Transverse colon (tissue), 4 donors: ENCODE measurements at regions of chr20 and their contacts with region 1.

Region 1: GRCh38 chr20:63864847-63865640 is at the start of gene TPD52L2:
- DNase-seq: peak; percentile 99
- H3K4me3 ChIP-seq: peak within 1 kb of the TSS; percentile 77 to 92 (median 86)
- H3K27ac ChIP-seq: peak within 1 kb of the TSS; percentile 92 to 96 (median 94)
- H3K4me1 ChIP-seq: peaks cover 19 to 24% (median 22%) of the 10 kb centered on the region in 4 donors
- H3K27me3 ChIP-seq: no peaks in the 10 kb centered on the region
- CTCF ChIP-seq: no peak
- EP300 ChIP-seq: no peak
- POLR2A ChIP-seq: peak; percentile 97
- total RNA-seq, gene TPD52L2: 40.8 to 67.0 (median 62.6) TPM

Region 2: GRCh38 chr20:63206904-63207303 is 658.1 kb before region 1 on chr20:
- in situ Hi-C with region 1: no loop called
- intact Hi-C with region 1: no loop called
- DNase-seq: no peak
- H3K4me3 ChIP-seq: no peak overlapping the region
- H3K27ac ChIP-seq: no peak overlapping the region
- H3K4me1 ChIP-seq: peaks cover 0 to under 1% (median 0%) of the 10 kb centered on the region in 4 donors
- H3K27me3 ChIP-seq: no peaks in the 10 kb centered on the region
- CTCF ChIP-seq: no peak
- EP300 ChIP-seq: no peak
- POLR2A ChIP-seq: no peak

Region 3: GRCh38 chr20:63580796-63581461 is 284.1 kb before region 1 on chr20:
- in situ Hi-C with region 1: no loop called
- intact Hi-C with region 1: loop called (anchors 2 kb)
- DNase-seq: peak; percentile 50
- H3K4me3 ChIP-seq: no peak overlapping the region
- H3K27ac ChIP-seq: no peak overlapping the region
- H3K4me1 ChIP-seq: no peaks in the 10 kb centered on the region
- H3K27me3 ChIP-seq: peaks cover 24% of the 10 kb centered on the region
- CTCF ChIP-seq: peak in 2 of 5 experiments; percentile 13 to 14
- EP300 ChIP-seq: no peak
- POLR2A ChIP-seq: no peak